ENCODE measurements at regions of chr14 and their contacts with region 1.

Region 1: DNA sequence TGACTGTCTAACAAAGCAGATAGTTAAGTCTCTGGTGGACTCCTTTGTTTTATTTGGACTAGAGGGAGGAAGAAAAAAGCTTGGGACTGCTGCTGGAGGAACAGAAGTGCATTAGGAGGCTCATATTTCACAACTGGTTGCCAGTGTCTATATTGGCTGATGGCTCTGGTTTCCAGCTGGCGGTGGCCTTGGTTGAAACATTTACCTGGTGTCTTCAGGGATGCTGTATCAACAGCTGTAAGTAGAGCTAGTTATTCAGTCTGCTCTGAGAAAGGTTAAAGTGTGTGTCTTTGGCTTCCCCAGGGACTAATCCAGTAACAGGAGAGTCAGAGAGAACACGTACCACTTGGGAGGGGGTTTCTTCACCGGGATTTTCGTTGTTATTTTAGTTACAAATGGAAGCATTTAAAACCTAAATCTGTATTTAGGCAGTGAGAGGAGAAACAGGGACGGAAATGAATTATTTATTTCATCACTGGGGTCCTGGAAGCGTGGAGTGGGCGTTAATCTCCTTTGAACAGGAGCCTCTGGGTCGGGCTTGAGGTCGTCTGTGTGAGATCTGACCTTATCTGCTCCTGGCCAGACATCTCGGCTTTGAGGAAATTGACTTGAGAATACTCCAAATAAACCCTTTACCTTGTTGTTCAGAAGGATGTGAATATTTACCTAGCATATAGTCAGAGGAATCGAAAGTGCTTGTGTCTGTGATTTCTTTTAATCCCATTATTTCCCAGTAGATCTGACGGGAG is 149.9 kb downstream of the NRXN3 start:
- DNase-seq: no peak
- H3K4me3 ChIP-seq: no peak overlapping the region
- H3K27ac ChIP-seq: no peak overlapping the region
- H3K4me1 ChIP-seq: no peaks in the 10 kb centered on the region
- H3K27me3 ChIP-seq: no peaks in the 10 kb centered on the region
- CTCF ChIP-seq: no peak
- EP300 ChIP-seq: no peak
- POLR2A ChIP-seq: no peak

Region 2: DNA sequence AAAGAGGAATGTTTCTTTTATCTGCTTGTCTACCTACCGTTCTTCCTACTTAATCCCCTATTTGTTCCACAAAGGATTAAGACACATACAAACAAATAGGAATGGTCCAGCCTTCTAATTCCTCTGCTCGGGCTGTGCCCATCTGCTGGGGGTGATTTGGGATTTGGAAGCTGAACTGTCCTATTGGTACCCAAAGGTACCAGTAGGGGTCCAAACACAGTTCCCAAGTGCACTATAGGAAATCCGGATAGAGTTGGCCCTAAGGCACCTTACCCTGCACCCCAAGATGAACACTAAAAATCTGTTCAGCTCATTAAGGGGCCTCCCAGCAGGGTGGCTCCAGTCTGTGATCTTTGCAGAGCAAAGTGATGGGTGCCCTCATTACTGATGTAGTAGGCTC is 417.1 kb after region 1 on chr14:
- in situ Hi-C with region 1: no loop called
- intact Hi-C with region 1: no loop called
- DNase-seq: no peak
- H3K4me3 ChIP-seq: no peak overlapping the region
- H3K27ac ChIP-seq: no peak overlapping the region
- H3K4me1 ChIP-seq: no peaks in the 10 kb centered on the region
- H3K27me3 ChIP-seq: no peaks in the 10 kb centered on the region
- CTCF ChIP-seq: no peak
- EP300 ChIP-seq: no peak
- POLR2A ChIP-seq: no peak

Region 3: GRCh38 chr14:79411403-79412174 is 1091.5 kb after region 1 on chr14:
- in situ Hi-C with region 1: no loop called
- intact Hi-C with region 1: loop called (anchors 5 kb)
- DNase-seq: no peak
- H3K4me3 ChIP-seq: no peak overlapping the region
- H3K27ac ChIP-seq: no peak overlapping the region
- H3K4me1 ChIP-seq: no peaks in the 10 kb centered on the region
- H3K27me3 ChIP-seq: no peaks in the 10 kb centered on the region
- CTCF ChIP-seq: no peak
- EP300 ChIP-seq: no peak
- POLR2A ChIP-seq: no peak

Measured in transverse colon (tissue), 4 donors.